GM12878 (cell line): ENCODE measurements at regions of chr16 and their contacts with region 1.

Region 1: GRCh38 chr16:57300387-57301125 is 16.1 kb upstream of the PLLP start:
- DNase-seq: peak; percentile 99
- ATAC-seq: peak; percentile 81
- H3K4me3 ChIP-seq: peak overlapping the region; percentile 58; the same call in 1 of the 2 replicates
- H3K27ac ChIP-seq: peak overlapping the region; percentile 77
- H3K4me1 ChIP-seq: peaks cover 34% of the 10 kb centered on the region
- H3K27me3 ChIP-seq: no peaks in the 10 kb centered on the region
- CTCF ChIP-seq: peak; percentile 95 to 99 (median 99); a peak in 5 of 6 replicates
- EP300 ChIP-seq: peak in 1 of 2 experiments; percentile 83; a peak in 1 of 4 replicates
- POLR2A ChIP-seq: no peak; the same call in 1 of the 2 replicates
- RAD21 ChIP-seq: peak; percentile 98

Region 2: GRCh38 chr16:57084257-57084770 is 216.2 kb before region 1 on chr16:
- CTCF ChIA-PET with region 1: interaction called, 5 read pairs
- POLR2A ChIA-PET with region 1: no interaction called
- RAD21 ChIA-PET with region 1: interaction called, 3 read pairs
- SMC1A ChIA-PET with region 1: interaction called, 3 read pairs
- in situ Hi-C with region 1: no loop called
- intact Hi-C with region 1: loop called (anchors 2 kb)
- DNase-seq: peak; percentile 25
- ATAC-seq: peak; percentile 89
- H3K4me3 ChIP-seq: no peak overlapping the region
- H3K27ac ChIP-seq: no peak overlapping the region
- H3K4me1 ChIP-seq: no peaks in the 10 kb centered on the region
- H3K27me3 ChIP-seq: no peaks in the 10 kb centered on the region
- CTCF ChIP-seq: peak; percentile 95 to 100 (median 98)
- EP300 ChIP-seq: no peak
- POLR2A ChIP-seq: peak; percentile 54
- RAD21 ChIP-seq: peak; percentile 95

Region 3: GRCh38 chr16:57260294-57260929 is 40.1 kb before region 1 on chr16:
- CTCF ChIA-PET with region 1: interaction called, 3 read pairs
- POLR2A ChIA-PET with region 1: interaction called, 7 read pairs
- RAD21 ChIA-PET with region 1: interaction called, 4 read pairs
- SMC1A ChIA-PET with region 1: interaction called, 6 read pairs
- in situ Hi-C with region 1: no loop called
- intact Hi-C with region 1: loop called (anchors 1 kb)
- DNase-seq: peak; percentile 42
- ATAC-seq: peak; percentile 90
- H3K4me3 ChIP-seq: peak overlapping the region; percentile 35; the same call in 1 of the 2 replicates
- H3K27ac ChIP-seq: peak overlapping the region; percentile 16
- H3K4me1 ChIP-seq: peaks cover 3% of the 10 kb centered on the region
- H3K27me3 ChIP-seq: no peaks in the 10 kb centered on the region
- CTCF ChIP-seq: no peak
- EP300 ChIP-seq: no peak
- POLR2A ChIP-seq: no peak
- RAD21 ChIP-seq: no peak

Region 4: GRCh38 chr16:57349212-57350031 is 48.9 kb after region 1 on chr16:
- CTCF ChIA-PET with region 1: interaction called, 63 read pairs
- POLR2A ChIA-PET with region 1: interaction called, 9 read pairs
- RAD21 ChIA-PET with region 1: interaction called, 15 read pairs
- SMC1A ChIA-PET with region 1: interaction called, 19 read pairs
- in situ Hi-C with region 1: no loop called
- intact Hi-C with region 1: no loop called
- DNase-seq: peak; percentile 44
- ATAC-seq: peak; percentile 97
- H3K4me3 ChIP-seq: peak overlapping the region; percentile 53; the same call in 1 of the 2 replicates
- H3K27ac ChIP-seq: no peak overlapping the region
- H3K4me1 ChIP-seq: peaks cover 27% of the 10 kb centered on the region
- H3K27me3 ChIP-seq: no peaks in the 10 kb centered on the region
- CTCF ChIP-seq: no peak
- EP300 ChIP-seq: peak in 1 of 2 experiments; percentile 66; a peak in 2 of 4 replicates
- POLR2A ChIP-seq: no peak
- RAD21 ChIP-seq: peak; percentile 19; the same call in 1 of the 2 replicates

Region 5: GRCh38 chr16:57372372-57373116 is 72.0 kb after region 1 on chr16 and contains the start of gene CX3CL1:
- CTCF ChIA-PET with region 1: interaction called, 20 read pairs
- POLR2A ChIA-PET with region 1: interaction called, 28 read pairs
- RAD21 ChIA-PET with region 1: interaction called, 40 read pairs
- SMC1A ChIA-PET with region 1: interaction called, 55 read pairs
- in situ Hi-C with region 1: no loop called
- intact Hi-C with region 1: loop called (anchors 1 kb)
- DNase-seq: no peak
- ATAC-seq: peak; percentile 16
- H3K4me3 ChIP-seq: no peak within 1 kb of the TSS
- H3K27ac ChIP-seq: no peak within 1 kb of the TSS
- H3K4me1 ChIP-seq: peaks cover 14% of the 10 kb centered on the region
- H3K27me3 ChIP-seq: no peaks in the 10 kb centered on the region
- CTCF ChIP-seq: no peak
- EP300 ChIP-seq: 0 out of 4 replicates have a peak, but pooled peaks of 1 of the 2 experiments have one; percentile 22
- POLR2A ChIP-seq: no peak
- RAD21 ChIP-seq: no peak
- polyA plus RNA-seq, gene CX3CL1: 0.03 to 0.05 TPM

Region 6: DNA sequence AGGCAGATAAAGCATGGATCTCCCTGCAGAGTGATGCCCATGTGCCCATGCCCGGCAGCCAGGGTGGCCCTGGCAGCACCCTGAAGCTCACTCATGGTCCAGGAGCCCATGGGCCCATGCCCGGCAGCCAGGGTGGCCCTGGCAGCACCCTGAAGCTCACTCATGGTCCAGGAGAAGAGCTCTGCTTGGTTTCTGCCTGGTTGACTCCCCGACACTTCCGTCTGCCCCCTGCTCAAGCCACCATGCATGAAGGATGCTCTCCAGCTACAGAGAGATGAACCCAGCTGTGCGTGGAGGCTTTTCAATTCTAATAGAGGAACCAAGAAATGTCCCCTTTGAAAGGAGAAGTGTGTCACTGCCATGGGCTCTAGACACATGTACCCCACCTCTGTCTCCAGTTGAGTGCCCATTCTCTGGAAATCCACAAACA is 112.8 kb after region 1 on chr16:
- CTCF ChIA-PET with region 1: interaction called, 632 read pairs
- POLR2A ChIA-PET with region 1: interaction called, 65 read pairs
- RAD21 ChIA-PET with region 1: interaction called, 293 read pairs
- SMC1A ChIA-PET with region 1: interaction called, 283 read pairs
- in situ Hi-C with region 1: loop called (anchors 5 kb)
- intact Hi-C with region 1: loop called (anchors 1 kb)
- DNase-seq: peak; percentile 52
- ATAC-seq: peak; percentile 72
- H3K4me3 ChIP-seq: no peak overlapping the region
- H3K27ac ChIP-seq: peak overlapping the region; percentile 42; the same call in 1 of the 2 replicates
- H3K4me1 ChIP-seq: peaks cover 51% of the 10 kb centered on the region
- H3K27me3 ChIP-seq: no peaks in the 10 kb centered on the region
- CTCF ChIP-seq: no peak
- EP300 ChIP-seq: no peak
- POLR2A ChIP-seq: no peak
- RAD21 ChIP-seq: no peak

Region 7: DNA sequence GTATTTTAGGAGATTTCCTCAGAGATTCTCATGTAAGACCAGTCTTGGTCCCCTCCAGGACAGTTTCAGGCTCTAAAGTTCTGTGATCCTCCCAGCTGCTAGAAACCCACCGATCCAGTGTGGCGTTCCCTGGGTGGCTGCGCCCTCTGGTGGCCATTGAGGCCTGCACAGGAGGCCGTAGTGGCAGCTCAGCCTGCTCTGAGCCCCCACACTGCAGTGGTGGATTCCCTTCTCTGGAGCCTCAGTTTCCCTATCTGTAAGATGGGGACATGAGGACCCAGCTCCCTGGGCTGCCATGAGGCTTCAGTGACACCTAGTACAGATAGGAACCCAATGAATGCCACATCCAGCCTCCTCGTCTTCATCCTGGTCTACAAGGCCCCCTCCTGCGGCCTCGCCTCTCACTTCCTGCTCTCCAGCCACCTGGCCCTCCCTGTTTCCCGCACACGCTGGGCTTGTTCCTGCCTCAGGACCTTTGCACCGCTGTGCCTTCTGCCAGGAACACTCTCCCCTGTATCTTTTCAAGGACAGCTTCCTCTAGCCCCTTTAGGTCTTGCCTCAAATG is 219.3 kb after region 1 on chr16:
- CTCF ChIA-PET with region 1: interaction called, 26 read pairs
- POLR2A ChIA-PET with region 1: no interaction called
- RAD21 ChIA-PET with region 1: interaction called, 12 read pairs
- SMC1A ChIA-PET with region 1: interaction called, 17 read pairs
- in situ Hi-C with region 1: loop called (anchors 5 kb)
- intact Hi-C with region 1: loop called (anchors 1 kb)
- DNase-seq: no peak
- ATAC-seq: peak; percentile 96
- H3K4me3 ChIP-seq: no peak overlapping the region
- H3K27ac ChIP-seq: no peak overlapping the region
- H3K4me1 ChIP-seq: peaks cover 12% of the 10 kb centered on the region
- H3K27me3 ChIP-seq: no peaks in the 10 kb centered on the region
- CTCF ChIP-seq: peak; percentile 91 to 99 (median 98); a peak in 5 of 6 replicates
- EP300 ChIP-seq: no peak
- POLR2A ChIP-seq: no peak
- RAD21 ChIP-seq: peak; percentile 96